ENCODE measurements at regions of chr5 and their contacts with region 1.

Region 1: DNA sequence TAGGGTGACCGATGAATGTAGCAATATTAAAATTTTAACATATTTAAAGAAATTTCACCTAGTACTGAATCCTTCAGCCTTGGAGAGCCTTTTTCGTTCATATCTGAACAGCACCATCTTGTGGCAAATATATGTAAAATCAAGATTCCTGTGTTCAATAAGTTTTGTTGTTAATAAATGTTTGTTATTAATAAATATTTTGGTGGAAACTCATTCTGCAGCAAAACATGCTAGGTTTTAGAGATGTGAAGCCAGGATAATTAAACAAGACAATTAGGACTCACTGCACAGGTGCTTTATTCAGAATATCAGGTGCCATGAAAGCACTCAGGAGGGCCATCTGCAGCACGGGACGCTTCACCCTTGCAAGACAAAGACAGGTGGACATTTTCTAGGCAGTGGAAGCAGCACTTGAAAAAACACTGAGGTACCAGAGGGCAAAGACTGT is 15.7 kb downstream of the TICAM2 start:
- DNase-seq: no peak
- H3K4me3 Mint-ChIP-seq: no peak overlapping the region
- H3K27ac Mint-ChIP-seq: no peak overlapping the region
- H3K4me1 Mint-ChIP-seq: no peaks in the 10 kb centered on the region
- H3K27me3 Mint-ChIP-seq: peaks cover 15% of the 10 kb centered on the region

Region 2: DNA sequence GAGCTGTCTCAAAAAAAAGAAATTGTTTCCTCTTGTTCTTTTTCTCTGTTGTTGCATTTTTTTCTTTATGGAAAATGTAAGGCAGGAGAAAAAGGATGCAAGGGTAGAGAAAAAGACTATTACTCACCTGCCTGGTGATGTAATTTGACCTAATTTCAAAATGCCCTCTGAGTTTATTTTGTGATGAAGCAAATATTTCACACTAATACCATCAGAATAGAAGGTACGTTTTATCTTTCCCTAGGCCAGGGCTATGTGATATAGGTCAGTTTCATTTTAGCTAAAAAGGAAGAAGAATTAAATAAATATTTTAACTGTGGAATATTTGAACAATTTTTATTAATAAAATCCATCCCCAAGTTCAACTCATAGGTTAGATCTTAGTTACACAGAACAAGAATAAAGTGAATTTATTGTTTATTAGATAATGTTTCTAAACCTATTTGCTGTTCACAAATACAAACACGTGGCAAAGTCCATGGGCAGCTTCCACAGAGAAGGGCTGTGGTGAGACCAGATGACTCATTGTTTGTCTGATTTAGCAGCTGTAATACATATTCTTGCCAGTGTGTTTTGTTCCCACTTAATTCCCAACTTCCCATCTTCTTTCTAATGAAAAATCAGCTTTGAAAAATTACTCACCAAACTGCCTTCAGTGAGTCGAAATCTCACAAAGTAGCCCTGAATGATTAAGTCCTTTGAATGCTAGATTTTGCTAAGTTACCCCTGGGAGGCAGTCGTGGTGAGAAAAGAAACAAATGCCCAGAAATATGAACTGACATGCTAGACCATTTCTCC is 237.4 kb before region 1 on chr5:
- intact Hi-C with region 1: no loop called
- DNase-seq: no peak
- H3K4me3 Mint-ChIP-seq: no peak overlapping the region
- H3K27ac Mint-ChIP-seq: no peak overlapping the region
- H3K4me1 Mint-ChIP-seq: no peaks in the 10 kb centered on the region
- H3K27me3 Mint-ChIP-seq: peaks cover 35% of the 10 kb centered on the region

Region 3: GRCh38 chr5:115389799-115390382 is 196.7 kb before region 1 on chr5:
- intact Hi-C with region 1: loop called (anchors 5 kb)
- DNase-seq: no peak
- H3K4me3 Mint-ChIP-seq: no peak overlapping the region
- H3K27ac Mint-ChIP-seq: no peak overlapping the region
- H3K4me1 Mint-ChIP-seq: no peaks in the 10 kb centered on the region
- H3K27me3 Mint-ChIP-seq: peaks cover 5% of the 10 kb centered on the region

Region 4: GRCh38 chr5:115641948-115642347 is 55.3 kb after region 1 on chr5:
- intact Hi-C with region 1: no loop called
- DNase-seq: no peak
- H3K4me3 Mint-ChIP-seq: no peak overlapping the region
- H3K27ac Mint-ChIP-seq: no peak overlapping the region
- H3K4me1 Mint-ChIP-seq: peaks cover 17% of the 10 kb centered on the region
- H3K27me3 Mint-ChIP-seq: peaks cover 80% of the 10 kb centered on the region

Region 5: DNA sequence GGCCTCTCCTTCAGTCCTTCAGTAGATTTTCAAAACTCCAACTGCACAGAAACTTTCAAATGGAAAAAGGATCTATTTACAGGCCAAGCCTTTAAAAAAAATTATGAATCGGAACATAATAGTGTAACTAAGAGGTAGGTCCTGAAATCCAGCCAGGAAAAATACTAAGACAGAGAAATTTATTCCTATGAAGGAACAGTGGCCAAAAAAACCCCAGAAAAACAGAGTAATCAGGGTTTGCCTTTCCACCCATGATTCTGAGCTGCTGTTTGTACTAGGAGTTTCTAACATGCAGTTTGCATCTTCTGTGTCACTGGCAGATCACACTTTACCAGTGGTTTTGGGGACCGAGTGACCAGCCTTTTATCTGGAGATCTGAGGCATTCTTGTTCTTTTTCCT is 132.3 kb after region 1 on chr5:
- intact Hi-C with region 1: no loop called
- DNase-seq: no peak
- H3K4me3 Mint-ChIP-seq: no peak overlapping the region
- H3K27ac Mint-ChIP-seq: no peak overlapping the region
- H3K4me1 Mint-ChIP-seq: no peaks in the 10 kb centered on the region
- H3K27me3 Mint-ChIP-seq: peaks cover 16% of the 10 kb centered on the region